Sciatic nerve (tissue), 2 donors: ENCODE measurements at regions of chr11 and their contacts with region 1.

Region 1: GRCh38 chr11:68266121-68266891 is 5.5 kb downstream of the C11orf24 start:
- DNase-seq: no peak
- ATAC-seq: peak; percentile 34

Region 2: DNA sequence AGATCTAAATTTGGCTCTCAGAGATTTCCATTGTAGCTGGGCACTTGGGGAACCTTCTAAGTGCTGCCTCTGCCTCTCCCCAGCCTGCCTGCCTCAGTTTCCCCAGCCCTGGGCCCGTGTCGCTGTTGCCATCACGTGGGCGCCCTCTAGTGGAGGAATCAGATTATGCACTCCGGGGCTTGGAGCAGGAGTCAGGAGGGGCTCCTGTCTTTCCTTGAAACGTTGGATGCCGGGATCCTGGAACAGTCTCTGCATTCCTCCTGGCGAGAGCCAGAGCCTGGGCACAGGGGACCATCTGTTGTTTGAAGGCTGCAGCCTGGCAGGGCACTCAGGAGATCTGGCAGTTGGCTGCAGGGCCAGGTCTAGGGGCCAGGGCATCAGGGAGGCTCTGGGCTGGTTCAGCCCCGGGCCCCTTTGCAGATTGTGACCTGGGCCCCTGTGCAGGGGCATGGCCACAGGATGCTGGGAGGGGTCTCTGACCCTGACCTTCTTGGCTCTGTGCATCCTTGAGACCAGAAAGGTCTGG is 117.7 kb after region 1 on chr11:
- intact Hi-C with region 1: loop called (anchors 10 kb)
- DNase-seq: peak; percentile 87
- ATAC-seq: peak; percentile 21

Region 3: GRCh38 chr11:68447015-68447801 is 180.9 kb after region 1 on chr11:
- intact Hi-C with region 1: loop called (anchors 5 kb)
- DNase-seq: peak; percentile 90
- ATAC-seq: peak; percentile 93